ENCODE measurements at regions of chr15 and their contacts with region 1.

Region 1: GRCh38 chr15:60548101-60548500 is 69.2 kb upstream of the ICE2 start:
- DNase-seq: peak; percentile 38
- H3K4me3 Mint-ChIP-seq: peak overlapping the region; percentile 63
- H3K27ac Mint-ChIP-seq: peak overlapping the region; percentile 91
- H3K4me1 Mint-ChIP-seq: peaks cover 79% of the 10 kb centered on the region
- H3K27me3 Mint-ChIP-seq: peaks cover 2% of the 10 kb centered on the region

Region 2: GRCh38 chr15:60389261-60390077 is 158.6 kb before region 1 on chr15:
- intact Hi-C with region 1: loop called (anchors 2 kb)
- DNase-seq: peak; percentile 62
- H3K4me3 Mint-ChIP-seq: peak overlapping the region; percentile 26
- H3K27ac Mint-ChIP-seq: peak overlapping the region; percentile 75
- H3K4me1 Mint-ChIP-seq: peaks cover 63% of the 10 kb centered on the region
- H3K27me3 Mint-ChIP-seq: no peaks in the 10 kb centered on the region

Region 3: GRCh38 chr15:60478566-60479360 is 69.3 kb before region 1 on chr15 and contains the start of gene ICE2:
- intact Hi-C with region 1: loop called (anchors 2 kb)
- DNase-seq: peak; percentile 94
- H3K4me3 Mint-ChIP-seq: peak within 1 kb of the TSS; percentile 97
- H3K27ac Mint-ChIP-seq: peak within 1 kb of the TSS; percentile 99
- H3K4me1 Mint-ChIP-seq: peaks cover 42% of the 10 kb centered on the region
- H3K27me3 Mint-ChIP-seq: no peaks in the 10 kb centered on the region
- total RNA-seq, gene ICE2: 48.0 and 50.4 TPM in 2 replicates

Region 4: GRCh38 chr15:60507596-60508424 is 40.3 kb before region 1 on chr15:
- intact Hi-C with region 1: loop called (anchors 5 kb)
- DNase-seq: peak; percentile 43
- H3K4me3 Mint-ChIP-seq: no peak overlapping the region
- H3K27ac Mint-ChIP-seq: peak overlapping the region; percentile 11
- H3K4me1 Mint-ChIP-seq: peaks cover 29% of the 10 kb centered on the region
- H3K27me3 Mint-ChIP-seq: no peaks in the 10 kb centered on the region

Measured in activated T-helper 2 cell treated with anti-CD3 and anti-CD28 coated beads, Interferon-gamma antibody, Interleukin-2, Interleukin-4, amounts not matched to agents 10 μg/mL and 5 μg/mL and 100 μg/mL, durations not matched to agents 14 hours and 24 hours and 36 hours (primary cell).